Tibial artery (tissue), 4 donors: ENCODE measurements at regions of chr11 and their contacts with region 1.

Region 1: GRCh38 chr11:112280268-112281126 is 19.8 kb upstream of the PLET1 start:
- DNase-seq: peak; percentile 66 to 71
- H3K4me3 ChIP-seq: peak overlapping the region; percentile 46 to 51
- H3K27ac ChIP-seq: peak overlapping the region; percentile 33 to 59
- H3K4me1 ChIP-seq: peaks cover 0 to 9% (median 0%) of the 10 kb centered on the region in 4 donors
- H3K27me3 ChIP-seq: no peaks in the 10 kb centered on the region
- CTCF ChIP-seq: peak; percentile 57 to 82

Region 2: GRCh38 chr11:112219476-112220232 is 60.8 kb before region 1 on chr11:
- intact Hi-C with region 1: loop called (anchors 2 kb)
- DNase-seq: no peak
- H3K4me3 ChIP-seq: no peak overlapping the region
- H3K27ac ChIP-seq: no peak overlapping the region
- H3K4me1 ChIP-seq: peaks cover 0 to 4% (median 0%) of the 10 kb centered on the region in 4 donors
- H3K27me3 ChIP-seq: no peaks in the 10 kb centered on the region
- CTCF ChIP-seq: peak; percentile 80 to 83